MCF 10A (cell line): ENCODE measurements at regions of chr12 and their contacts with region 1.

Region 1: GRCh38 chr12:94101738-94102660 is 46.4 kb upstream of the PLXNC1 start:
- DNase-seq: peak; percentile 92
- H3K4me3 Mint-ChIP-seq: peak overlapping the region; percentile 75
- H3K27ac Mint-ChIP-seq: no peak overlapping the region
- H3K4me1 Mint-ChIP-seq: peaks cover 46% of the 10 kb centered on the region
- H3K27me3 Mint-ChIP-seq: no peaks in the 10 kb centered on the region
- CTCF ChIP-seq: peak; percentile 80

Region 2: GRCh38 chr12:93502802-93503623 is 599.0 kb before region 1 on chr12:
- CTCF ChIA-PET with region 1: interaction called, 245 read pairs
- POLR2A ChIA-PET with region 1: interaction called, 48 read pairs
- intact Hi-C with region 1: loop called (anchors 2 kb)
- DNase-seq: peak; percentile 54
- H3K4me3 Mint-ChIP-seq: no peak overlapping the region
- H3K27ac Mint-ChIP-seq: no peak overlapping the region
- H3K4me1 Mint-ChIP-seq: no peaks in the 10 kb centered on the region
- H3K27me3 Mint-ChIP-seq: no peaks in the 10 kb centered on the region
- CTCF ChIP-seq: peak; percentile 81

Region 3: GRCh38 chr12:93569656-93570551 is 532.1 kb before region 1 on chr12:
- CTCF ChIA-PET with region 1: interaction called, 159 read pairs
- POLR2A ChIA-PET with region 1: interaction called, 90 read pairs
- intact Hi-C with region 1: loop called (anchors 1 kb)
- DNase-seq: peak; percentile 91
- H3K4me3 Mint-ChIP-seq: peak overlapping the region; percentile 84
- H3K27ac Mint-ChIP-seq: peak overlapping the region; percentile 42
- H3K4me1 Mint-ChIP-seq: peaks cover 15% of the 10 kb centered on the region
- H3K27me3 Mint-ChIP-seq: no peaks in the 10 kb centered on the region
- CTCF ChIP-seq: peak; percentile 94

Region 4: GRCh38 chr12:93742110-93742934 is 359.7 kb before region 1 on chr12:
- CTCF ChIA-PET with region 1: interaction called, 36 read pairs
- POLR2A ChIA-PET with region 1: interaction called, 44 read pairs
- intact Hi-C with region 1: loop called (anchors 1 kb)
- DNase-seq: peak; percentile 78
- H3K4me3 Mint-ChIP-seq: peak overlapping the region; percentile 79
- H3K27ac Mint-ChIP-seq: peak overlapping the region; percentile 95
- H3K4me1 Mint-ChIP-seq: peaks cover 38% of the 10 kb centered on the region
- H3K27me3 Mint-ChIP-seq: no peaks in the 10 kb centered on the region
- CTCF ChIP-seq: peak; percentile 38

Region 5: GRCh38 chr12:93785262-93786010 is 316.6 kb before region 1 on chr12:
- CTCF ChIA-PET with region 1: interaction called, 29 read pairs
- POLR2A ChIA-PET with region 1: interaction called, 30 read pairs
- intact Hi-C with region 1: no loop called
- DNase-seq: peak; percentile 94
- H3K4me3 Mint-ChIP-seq: peak overlapping the region; percentile 3
- H3K27ac Mint-ChIP-seq: peak overlapping the region; percentile 80
- H3K4me1 Mint-ChIP-seq: peaks cover 29% of the 10 kb centered on the region
- H3K27me3 Mint-ChIP-seq: no peaks in the 10 kb centered on the region
- CTCF ChIP-seq: no peak

Region 6: GRCh38 chr12:93979189-93979588 is 122.8 kb before region 1 on chr12:
- CTCF ChIA-PET with region 1: interaction called, 9 read pairs
- POLR2A ChIA-PET with region 1: interaction called, 6 read pairs
- intact Hi-C with region 1: loop called (anchors 2 kb)
- DNase-seq: peak; percentile 56
- H3K4me3 Mint-ChIP-seq: no peak overlapping the region
- H3K27ac Mint-ChIP-seq: peak overlapping the region; percentile 75
- H3K4me1 Mint-ChIP-seq: peaks cover 39% of the 10 kb centered on the region
- H3K27me3 Mint-ChIP-seq: no peaks in the 10 kb centered on the region
- CTCF ChIP-seq: peak; percentile 36